Activated CD4-positive, alpha-beta memory T cell treated with anti-CD3 and anti-CD28 coated beads, Interleukin-2, amount 10 ng/mL, durations not matched to agents 7 days and 5 days (primary cell): ENCODE measurements at regions of chr6 and their contacts with region 1.

Region 1: GRCh38 chr6:16761471-16762267 is 409 bp upstream of the ATXN1 start:
- DNase-seq: peak; percentile 89
- H3K4me3 Mint-ChIP-seq: peak overlapping the region; percentile 83
- H3K27ac Mint-ChIP-seq: peak overlapping the region; percentile 96
- H3K4me1 Mint-ChIP-seq: peaks cover 58% of the 10 kb centered on the region
- H3K27me3 Mint-ChIP-seq: no peaks in the 10 kb centered on the region

Region 2: DNA sequence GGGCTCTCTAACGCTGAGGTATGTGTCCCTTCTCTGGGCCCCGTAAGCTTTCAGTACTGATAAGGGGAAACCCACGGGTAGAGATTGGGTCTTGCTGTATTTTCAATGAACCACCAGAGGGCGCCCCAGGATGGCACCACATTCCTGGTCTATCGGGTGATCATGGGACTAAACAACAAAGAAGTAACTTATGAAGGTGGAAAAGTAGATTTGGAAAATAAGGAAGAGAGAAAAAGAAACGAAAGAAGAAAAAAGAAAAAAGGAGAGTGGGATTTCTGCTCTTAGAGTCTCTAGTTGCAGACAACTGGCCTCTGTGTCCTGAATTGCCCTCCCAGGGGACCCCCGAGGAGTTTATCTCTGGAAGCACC is 429.5 kb before region 1 on chr6:
- CTCF ChIA-PET with region 1: interaction called, 31 read pairs
- POLR2A ChIA-PET with region 1: interaction called, 6 read pairs
- DNase-seq: peak; percentile 83
- H3K4me3 Mint-ChIP-seq: no peak overlapping the region
- H3K27ac Mint-ChIP-seq: no peak overlapping the region
- H3K4me1 Mint-ChIP-seq: peaks cover 3% of the 10 kb centered on the region
- H3K27me3 Mint-ChIP-seq: no peaks in the 10 kb centered on the region

Region 3: GRCh38 chr6:16481697-16482399 is 279.8 kb before region 1 on chr6:
- CTCF ChIA-PET with region 1: interaction called, 10 read pairs
- POLR2A ChIA-PET with region 1: interaction called, 40 read pairs
- DNase-seq: peak; percentile 80
- H3K4me3 Mint-ChIP-seq: peak overlapping the region; percentile 46
- H3K27ac Mint-ChIP-seq: peak overlapping the region; percentile 94
- H3K4me1 Mint-ChIP-seq: peaks cover 94% of the 10 kb centered on the region
- H3K27me3 Mint-ChIP-seq: no peaks in the 10 kb centered on the region

Region 4: DNA sequence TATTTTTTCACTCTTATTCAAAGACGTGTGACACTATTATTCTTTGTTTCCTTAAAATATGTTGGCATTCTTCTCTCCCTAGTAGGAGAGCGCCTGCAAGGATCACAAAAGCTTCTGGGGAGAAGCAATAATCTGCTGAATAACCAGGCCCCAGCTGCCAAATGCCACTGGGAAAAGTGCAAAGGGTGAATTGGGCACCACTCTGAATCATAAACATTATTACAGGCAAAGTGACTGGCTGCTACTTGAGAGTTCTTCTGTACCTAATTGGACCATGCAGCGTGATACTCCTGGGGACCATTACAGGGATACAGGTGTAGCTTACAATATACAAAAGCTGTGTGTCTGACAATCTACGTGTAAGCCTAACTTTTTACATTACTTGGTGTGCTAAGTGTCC is 153.2 kb before region 1 on chr6:
- CTCF ChIA-PET with region 1: no interaction called
- POLR2A ChIA-PET with region 1: no interaction called
- DNase-seq: no peak
- H3K4me3 Mint-ChIP-seq: no peak overlapping the region
- H3K27ac Mint-ChIP-seq: no peak overlapping the region
- H3K4me1 Mint-ChIP-seq: peaks cover 8% of the 10 kb centered on the region
- H3K27me3 Mint-ChIP-seq: no peaks in the 10 kb centered on the region

Region 5: GRCh38 chr6:16670183-16670582 is 91.5 kb before region 1 on chr6:
- CTCF ChIA-PET with region 1: interaction called, 14 read pairs
- POLR2A ChIA-PET with region 1: interaction called, 12 read pairs
- DNase-seq: peak; percentile 29
- H3K4me3 Mint-ChIP-seq: peak overlapping the region; percentile 60
- H3K27ac Mint-ChIP-seq: peak overlapping the region; percentile 96
- H3K4me1 Mint-ChIP-seq: peaks cover 79% of the 10 kb centered on the region
- H3K27me3 Mint-ChIP-seq: no peaks in the 10 kb centered on the region

Region 6: DNA sequence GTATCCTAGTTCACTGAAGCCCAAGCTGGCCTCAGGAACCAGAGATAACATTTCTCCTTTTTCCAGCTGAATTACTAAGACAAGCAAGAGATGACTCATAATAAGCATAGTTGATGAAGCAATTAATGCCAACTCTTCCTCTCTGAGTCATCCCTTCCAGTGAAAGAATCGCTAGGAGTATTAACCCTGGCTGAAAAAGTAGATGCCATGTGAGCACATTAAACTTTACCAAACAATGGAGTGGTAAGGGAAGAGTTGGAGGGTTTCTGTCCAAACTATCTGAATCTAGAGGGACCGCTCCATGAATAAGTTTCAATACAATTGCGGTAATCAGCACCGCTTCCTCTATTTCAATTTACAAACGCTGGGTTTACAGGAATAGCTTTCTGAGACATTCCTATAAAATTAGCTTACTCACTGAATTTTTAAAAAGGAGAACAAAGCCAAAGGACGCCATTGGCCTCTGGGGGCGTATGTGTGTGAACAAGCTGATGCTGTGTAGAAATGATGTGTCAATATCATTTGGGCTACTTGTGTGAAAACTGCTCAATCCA is 48.7 kb before region 1 on chr6:
- CTCF ChIA-PET with region 1: interaction called, 49 read pairs
- POLR2A ChIA-PET with region 1: interaction called, 24 read pairs
- DNase-seq: no peak
- H3K4me3 Mint-ChIP-seq: peak overlapping the region; percentile 66
- H3K27ac Mint-ChIP-seq: peak overlapping the region; percentile 97
- H3K4me1 Mint-ChIP-seq: peaks cover 70% of the 10 kb centered on the region
- H3K27me3 Mint-ChIP-seq: no peaks in the 10 kb centered on the region

Region 7: GRCh38 chr6:16836144-16836981 is 74.7 kb after region 1 on chr6:
- CTCF ChIA-PET with region 1: interaction called, 3 read pairs
- POLR2A ChIA-PET with region 1: interaction called, 14 read pairs
- DNase-seq: no peak
- H3K4me3 Mint-ChIP-seq: peak overlapping the region; percentile 68
- H3K27ac Mint-ChIP-seq: peak overlapping the region; percentile 85
- H3K4me1 Mint-ChIP-seq: peaks cover 39% of the 10 kb centered on the region
- H3K27me3 Mint-ChIP-seq: peaks cover 5% of the 10 kb centered on the region